Activated CD8-positive, alpha-beta T cell treated with anti-CD3 and anti-CD28 coated beads, Interleukin-2, amount 10 ng/mL, durations not matched to agents 7 days and 5 days (primary cell): ENCODE measurements at regions of chr22 and their contacts with region 1.

Region 1: DNA sequence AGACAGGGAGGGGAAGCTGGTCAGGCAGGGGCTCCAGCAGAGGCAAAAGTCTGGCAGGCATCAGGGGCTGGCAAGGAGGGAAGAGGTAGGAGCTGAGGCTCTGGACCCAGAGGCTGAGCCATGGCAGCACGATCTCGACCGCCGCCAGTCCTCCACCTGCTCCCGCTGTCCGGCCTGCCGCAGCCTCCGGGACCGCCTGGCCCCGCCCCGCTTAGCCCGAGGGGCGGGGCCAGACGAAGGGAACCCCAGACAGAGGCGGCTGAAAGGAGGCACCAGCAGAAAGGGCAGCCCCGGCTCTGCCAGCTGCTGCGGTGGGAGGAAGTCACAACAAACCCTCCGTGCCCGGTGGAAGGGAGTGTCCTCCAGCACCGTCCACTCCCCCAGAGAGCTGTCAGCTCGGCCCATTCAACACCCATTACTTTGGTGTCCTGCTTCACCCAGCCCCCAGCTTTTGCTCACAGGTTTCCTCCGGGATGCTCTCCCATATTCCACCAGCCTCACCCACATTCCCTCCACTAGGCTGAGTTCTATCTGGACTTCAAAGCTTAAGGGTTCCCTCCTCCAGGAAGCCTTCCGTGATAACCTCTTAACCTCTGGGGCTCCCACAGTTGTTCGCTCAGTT is at the start of gene MFNG:
- DNase-seq: peak; percentile 81
- ATAC-seq: peak; percentile 62
- H3K4me3 Mint-ChIP-seq: peak within 1 kb of the TSS; percentile 88
- H3K27ac Mint-ChIP-seq: peak within 1 kb of the TSS; percentile 97
- H3K4me1 Mint-ChIP-seq: peaks cover 69% of the 10 kb centered on the region
- H3K27me3 Mint-ChIP-seq: no peaks in the 10 kb centered on the region
- total RNA-seq, gene MFNG: 227 to 232 TPM

Region 2: DNA sequence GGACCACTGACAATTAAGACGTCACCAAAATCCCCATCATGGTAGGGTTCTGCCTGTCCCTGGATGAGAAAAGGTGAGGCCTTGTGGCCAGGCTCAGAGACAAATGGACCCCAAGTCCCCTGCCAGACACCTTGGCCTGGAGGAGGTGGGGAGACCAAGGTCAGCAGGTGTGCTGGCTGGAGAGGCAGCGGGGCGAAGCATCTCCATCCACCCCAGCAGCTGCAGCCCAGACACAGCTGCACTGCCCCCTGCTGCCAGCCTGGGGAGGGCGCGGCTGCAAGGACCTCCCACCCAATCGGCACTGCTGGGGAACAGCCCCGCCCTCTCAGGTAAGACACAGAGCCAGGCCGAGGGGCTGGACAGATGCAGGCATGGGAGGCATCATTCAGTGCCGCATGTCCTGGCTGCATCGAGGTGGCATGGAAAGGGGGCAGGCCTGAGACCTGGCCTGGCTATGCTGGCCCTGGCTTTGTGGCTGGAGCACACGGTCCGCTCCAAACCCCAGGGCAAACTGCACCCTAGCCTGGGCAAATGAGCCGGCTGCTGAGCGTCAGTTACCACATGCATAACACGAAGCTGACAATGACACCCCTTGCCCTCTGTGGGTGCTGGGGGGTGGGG is 12.1 kb after region 1 on chr22:
- CTCF ChIA-PET with region 1: interaction called, 14 read pairs
- POLR2A ChIA-PET with region 1: interaction called, 4 read pairs
- DNase-seq: peak; percentile 80
- ATAC-seq: peak; percentile 94
- H3K4me3 Mint-ChIP-seq: no peak overlapping the region
- H3K27ac Mint-ChIP-seq: no peak overlapping the region
- H3K4me1 Mint-ChIP-seq: peaks cover 21% of the 10 kb centered on the region
- H3K27me3 Mint-ChIP-seq: peaks cover 6% of the 10 kb centered on the region